T-cell (primary cell): ENCODE measurements at regions of chr9 and their contacts with region 1.

Region 1: DNA sequence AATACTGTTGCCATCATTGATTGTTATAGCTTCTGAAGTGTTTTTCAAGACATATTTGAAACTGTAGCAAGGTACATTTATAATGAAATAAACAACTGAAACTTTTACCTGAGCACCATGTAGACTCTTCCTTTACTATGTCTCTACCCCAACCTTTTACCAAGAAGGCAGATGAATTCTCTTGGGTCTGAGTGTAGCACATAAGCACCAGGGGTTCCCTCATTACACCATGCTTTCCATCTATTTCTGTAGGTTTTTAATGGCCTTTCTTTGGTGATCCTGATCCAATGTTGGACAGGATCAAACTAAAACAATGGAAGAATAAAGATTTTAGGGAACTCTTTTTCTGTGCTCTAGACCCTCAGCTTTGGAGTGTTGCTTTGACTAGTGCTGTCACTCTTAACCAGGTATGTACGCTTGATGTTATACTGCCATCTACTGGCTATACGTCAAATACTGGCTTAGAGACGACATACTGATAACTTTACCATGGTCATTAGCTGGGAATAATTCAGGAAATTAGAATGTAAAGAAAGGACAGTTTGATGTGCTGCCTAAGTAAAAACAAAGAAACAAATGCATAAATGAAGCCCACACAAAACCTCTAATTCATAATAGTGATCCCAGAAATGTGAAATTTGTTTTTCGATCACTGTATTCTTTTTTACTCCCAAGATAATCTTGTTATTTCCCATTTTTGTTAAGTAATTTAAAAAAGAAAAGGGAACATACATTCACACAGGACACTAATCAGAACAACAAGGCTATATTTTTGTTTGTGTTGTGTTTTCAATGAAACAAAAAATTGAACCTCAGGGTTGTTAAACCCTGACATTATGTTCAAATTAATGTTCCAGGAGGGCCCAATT is 30.7 kb downstream of the IFNW1 start:
- DNase-seq: peak in 7 of 35 experiments; percentile 9 to 86 (median 25)
- ATAC-seq: peak; percentile 67 to 88 (median 78)
- H3K4me3 ChIP-seq: no peak overlapping the region
- H3K4me3 Mint-ChIP-seq: no peak overlapping the region
- H3K27ac ChIP-seq: no peak overlapping the region
- H3K27ac Mint-ChIP-seq: no peak overlapping the region
- H3K4me1 ChIP-seq: no peaks in the 10 kb centered on the region
- H3K4me1 Mint-ChIP-seq: no peaks in the 10 kb centered on the region
- H3K27me3 ChIP-seq: no peaks in the 10 kb centered on the region
- H3K27me3 Mint-ChIP-seq: peaks cover 0 to 1% of the 10 kb centered on the region in 2 donors

Region 2: DNA sequence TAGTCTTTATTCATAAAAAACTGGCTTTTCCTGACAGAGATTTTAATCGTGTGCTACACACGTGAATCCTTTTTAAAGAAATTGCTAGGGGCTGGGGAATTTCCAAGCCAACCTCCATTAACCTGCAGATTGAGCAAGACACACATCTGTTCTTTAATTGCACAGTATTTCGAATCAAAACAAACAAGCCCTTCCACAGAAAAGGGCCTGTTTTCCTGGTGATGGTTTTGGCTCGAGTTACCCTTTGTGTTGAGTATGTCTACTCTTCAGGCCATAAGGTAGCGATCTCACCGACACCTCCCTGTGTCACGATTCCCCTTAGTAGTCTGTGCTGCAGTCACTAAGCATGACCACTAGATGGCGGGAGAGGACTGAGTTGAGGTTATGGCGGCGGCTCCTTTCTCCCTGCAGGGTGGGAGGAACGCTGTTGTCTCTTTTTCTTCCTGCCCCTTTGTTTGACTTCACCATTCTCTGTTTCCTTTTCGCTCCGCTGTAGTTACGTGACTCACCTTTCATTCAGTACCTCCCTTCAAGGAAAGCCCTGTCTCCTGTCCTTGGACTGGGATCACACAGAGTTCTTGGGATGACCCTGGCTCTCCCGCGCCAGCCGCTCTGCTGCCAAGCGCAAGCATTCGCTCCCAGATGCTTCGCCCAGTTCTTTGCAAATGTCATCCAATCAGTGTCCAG is 1185.0 kb before region 1 on chr9:
- CTCF ChIA-PET with region 1: interaction called, 5 to 20 read pairs
- POLR2A ChIA-PET with region 1: no interaction called
- DNase-seq: peak; percentile 55 to 89 (median 73)
- ATAC-seq: peak; percentile 95 to 99 (median 98)
- H3K4me3 ChIP-seq: no peak overlapping the region
- H3K4me3 Mint-ChIP-seq: peak overlapping the region; percentile 63 to 78 (median 65)
- H3K27ac ChIP-seq: no peak overlapping the region
- H3K27ac Mint-ChIP-seq: no peak overlapping the region
- H3K4me1 ChIP-seq: peaks cover 0 to 7% of the 10 kb centered on the region in 2 experiments
- H3K4me1 Mint-ChIP-seq: peaks cover 8 to 22% (median 9%) of the 10 kb centered on the region in 3 donors
- H3K27me3 ChIP-seq: peaks cover 2% of the 10 kb centered on the region in 2 experiments
- H3K27me3 Mint-ChIP-seq: peaks cover 3 to 5% of the 10 kb centered on the region in 2 donors

Region 3: GRCh38 chr9:20884985-20885593 is 225.9 kb before region 1 on chr9:
- CTCF ChIA-PET with region 1: interaction called, 30 to 50 read pairs
- POLR2A ChIA-PET with region 1: no interaction called
- DNase-seq: peak; percentile 9 to 72 (median 48)
- ATAC-seq: peak; percentile 47 to 56 (median 51)
- H3K4me3 ChIP-seq: no peak overlapping the region
- H3K4me3 Mint-ChIP-seq: no peak overlapping the region
- H3K27ac ChIP-seq: no peak overlapping the region
- H3K27ac Mint-ChIP-seq: no peak overlapping the region
- H3K4me1 ChIP-seq: no peaks in the 10 kb centered on the region
- H3K4me1 Mint-ChIP-seq: no peaks in the 10 kb centered on the region
- H3K27me3 ChIP-seq: no peaks in the 10 kb centered on the region
- H3K27me3 Mint-ChIP-seq: no peaks in the 10 kb centered on the region

Region 4: DNA sequence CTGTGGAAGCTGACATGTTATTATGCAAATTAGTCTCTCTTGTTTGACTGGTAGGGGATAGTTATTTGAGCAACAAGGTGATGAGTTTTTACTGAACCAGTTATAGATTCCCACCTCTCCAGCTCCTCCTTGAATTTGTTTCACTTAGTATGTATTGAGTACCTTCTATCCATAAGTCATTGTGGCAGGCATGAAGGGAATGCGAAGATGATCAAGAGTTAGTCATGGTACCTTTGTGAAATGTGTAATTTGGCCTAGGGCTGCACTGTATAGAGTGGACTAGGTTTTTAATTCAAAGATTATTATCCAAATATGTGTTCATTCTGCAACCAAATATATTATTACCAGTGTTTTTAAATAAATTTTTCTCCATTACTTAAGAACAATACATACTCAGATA is 189.6 kb before region 1 on chr9:
- CTCF ChIA-PET with region 1: no interaction called
- POLR2A ChIA-PET with region 1: no interaction called
- DNase-seq: no peak
- ATAC-seq: no peak
- H3K4me3 ChIP-seq: no peak overlapping the region
- H3K4me3 Mint-ChIP-seq: no peak overlapping the region
- H3K27ac ChIP-seq: no peak overlapping the region
- H3K27ac Mint-ChIP-seq: no peak overlapping the region
- H3K4me1 ChIP-seq: no peaks in the 10 kb centered on the region
- H3K4me1 Mint-ChIP-seq: no peaks in the 10 kb centered on the region
- H3K27me3 ChIP-seq: no peaks in the 10 kb centered on the region
- H3K27me3 Mint-ChIP-seq: no peaks in the 10 kb centered on the region

Region 5: GRCh38 chr9:21039302-21039701 is 71.6 kb before region 1 on chr9:
- CTCF ChIA-PET with region 1: no interaction called
- POLR2A ChIA-PET with region 1: no interaction called
- DNase-seq: peak in 1 of 35 experiments; percentile 11
- ATAC-seq: peak in 1 of 4 experiments; percentile 35
- H3K4me3 ChIP-seq: no peak overlapping the region
- H3K4me3 Mint-ChIP-seq: peak overlapping the region in 1 of 3 donors; percentile 19
- H3K27ac ChIP-seq: no peak overlapping the region
- H3K27ac Mint-ChIP-seq: peak overlapping the region; percentile 40 to 56
- H3K4me1 ChIP-seq: peaks cover 3 to 5% of the 10 kb centered on the region in 2 experiments
- H3K4me1 Mint-ChIP-seq: peaks cover 9 to 11% (median 11%) of the 10 kb centered on the region in 3 donors
- H3K27me3 ChIP-seq: no peaks in the 10 kb centered on the region
- H3K27me3 Mint-ChIP-seq: no peaks in the 10 kb centered on the region

Region 6: GRCh38 chr9:21078717-21079116 is 32.2 kb before region 1 on chr9:
- CTCF ChIA-PET with region 1: interaction called, 16 to 22 read pairs
- POLR2A ChIA-PET with region 1: no interaction called
- DNase-seq: peak in 1 of 35 experiments; percentile 45
- ATAC-seq: peak in 3 of 4 experiments; percentile 27 to 59 (median 55)
- H3K4me3 ChIP-seq: no peak overlapping the region
- H3K4me3 Mint-ChIP-seq: no peak overlapping the region
- H3K27ac ChIP-seq: no peak overlapping the region
- H3K27ac Mint-ChIP-seq: peak overlapping the region in 1 of 2 donors; percentile 35
- H3K4me1 ChIP-seq: peaks cover 9 to 24% of the 10 kb centered on the region in 2 experiments
- H3K4me1 Mint-ChIP-seq: peaks cover 27 to 38% (median 32%) of the 10 kb centered on the region in 3 donors
- H3K27me3 ChIP-seq: no peaks in the 10 kb centered on the region
- H3K27me3 Mint-ChIP-seq: no peaks in the 10 kb centered on the region

Region 7: GRCh38 chr9:21265421-21266189 is 154.7 kb after region 1 on chr9:
- CTCF ChIA-PET with region 1: no interaction called
- POLR2A ChIA-PET with region 1: no interaction called
- DNase-seq: no peak
- ATAC-seq: no peak
- H3K4me3 ChIP-seq: no peak overlapping the region
- H3K4me3 Mint-ChIP-seq: no peak overlapping the region
- H3K27ac ChIP-seq: no peak overlapping the region
- H3K27ac Mint-ChIP-seq: no peak overlapping the region
- H3K4me1 ChIP-seq: no peaks in the 10 kb centered on the region
- H3K4me1 Mint-ChIP-seq: peaks cover 0 to 6% (median 2%) of the 10 kb centered on the region in 3 donors
- H3K27me3 ChIP-seq: peaks cover 0 to 5% of the 10 kb centered on the region in 2 experiments
- H3K27me3 Mint-ChIP-seq: peaks cover 2 to 10% of the 10 kb centered on the region in 2 donors